AG04450 (cell line): ENCODE measurements at regions of chr1 and their contacts with region 1.

Region 1: GRCh38 chr1:150149271-150150132 is at the start of gene PLEKHO1:
- DNase-seq: no peak
- H3K4me3 ChIP-seq: peak within 1 kb of the TSS; percentile 90
- H3K27ac ChIP-seq: peak within 1 kb of the TSS; percentile 89
- H3K27me3 ChIP-seq: no peaks in the 10 kb centered on the region
- CTCF ChIP-seq: no peak
- polyA plus RNA-seq, gene PLEKHO1: 62.0 and 73.4 TPM in 2 replicates

Region 2: GRCh38 chr1:150072959-150073358 is 76.5 kb before region 1 on chr1:
- CTCF ChIA-PET with region 1: interaction called, 16 read pairs
- POLR2A ChIA-PET with region 1: no interaction called
- DNase-seq: no peak
- H3K4me3 ChIP-seq: no peak overlapping the region
- H3K27ac ChIP-seq: no peak overlapping the region
- H3K27me3 ChIP-seq: no peaks in the 10 kb centered on the region
- CTCF ChIP-seq: peak; percentile 46

Region 3: DNA sequence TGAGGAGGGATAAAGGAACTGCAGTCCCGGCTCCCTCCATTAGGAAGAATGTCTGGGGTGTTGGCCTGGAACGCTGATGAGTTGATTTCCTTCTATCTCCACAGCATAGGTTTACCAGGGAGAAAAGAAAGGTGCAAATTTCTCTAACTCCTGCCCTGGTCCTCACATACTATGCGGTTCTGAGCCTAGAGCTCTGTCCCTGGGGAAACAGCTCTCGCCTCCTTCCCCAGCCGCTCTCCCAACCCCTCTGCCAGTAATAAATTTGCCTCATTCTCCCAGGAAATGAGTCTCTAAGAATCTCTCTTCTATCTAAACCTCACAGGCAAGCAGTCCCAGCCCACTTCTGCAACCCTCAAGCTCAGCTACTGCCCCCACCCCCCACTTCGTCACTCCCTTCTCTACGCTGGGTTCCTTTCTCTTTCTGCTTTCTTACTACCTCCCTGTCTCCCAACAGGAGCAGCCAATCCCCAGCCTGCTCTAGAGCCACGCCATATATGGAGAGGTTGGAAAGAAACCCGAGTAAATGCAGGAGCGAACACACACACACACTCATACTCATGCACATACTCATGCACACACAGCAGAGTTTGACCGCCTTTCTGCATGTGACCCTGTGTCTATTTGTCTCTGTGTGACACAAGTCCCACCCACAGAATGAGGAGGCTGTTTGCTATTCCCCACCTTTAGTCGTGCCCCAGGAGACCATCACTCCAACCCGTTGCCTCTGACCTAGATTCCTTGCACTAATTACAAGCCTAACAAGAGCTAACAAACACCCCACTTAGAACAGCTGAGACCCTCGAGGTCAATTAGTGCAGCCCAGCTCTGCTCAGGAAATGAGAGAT is 13.6 kb after region 1 on chr1:
- CTCF ChIA-PET with region 1: interaction called, 5 read pairs
- POLR2A ChIA-PET with region 1: interaction called, 149 read pairs
- DNase-seq: peak; percentile 99
- H3K4me3 ChIP-seq: peak overlapping the region; percentile 30; the same call in 1 of the 2 replicates
- H3K27ac ChIP-seq: peak overlapping the region; percentile 99
- H3K27me3 ChIP-seq: no peaks in the 10 kb centered on the region
- CTCF ChIP-seq: no peak; the same call in 1 of the 2 replicates

Region 4: GRCh38 chr1:150309770-150310508 is 160.4 kb after region 1 on chr1:
- CTCF ChIA-PET with region 1: no interaction called
- POLR2A ChIA-PET with region 1: no interaction called
- DNase-seq: no peak
- H3K4me3 ChIP-seq: no peak overlapping the region
- H3K27ac ChIP-seq: no peak overlapping the region
- H3K27me3 ChIP-seq: no peaks in the 10 kb centered on the region
- CTCF ChIP-seq: no peak

Region 5: DNA sequence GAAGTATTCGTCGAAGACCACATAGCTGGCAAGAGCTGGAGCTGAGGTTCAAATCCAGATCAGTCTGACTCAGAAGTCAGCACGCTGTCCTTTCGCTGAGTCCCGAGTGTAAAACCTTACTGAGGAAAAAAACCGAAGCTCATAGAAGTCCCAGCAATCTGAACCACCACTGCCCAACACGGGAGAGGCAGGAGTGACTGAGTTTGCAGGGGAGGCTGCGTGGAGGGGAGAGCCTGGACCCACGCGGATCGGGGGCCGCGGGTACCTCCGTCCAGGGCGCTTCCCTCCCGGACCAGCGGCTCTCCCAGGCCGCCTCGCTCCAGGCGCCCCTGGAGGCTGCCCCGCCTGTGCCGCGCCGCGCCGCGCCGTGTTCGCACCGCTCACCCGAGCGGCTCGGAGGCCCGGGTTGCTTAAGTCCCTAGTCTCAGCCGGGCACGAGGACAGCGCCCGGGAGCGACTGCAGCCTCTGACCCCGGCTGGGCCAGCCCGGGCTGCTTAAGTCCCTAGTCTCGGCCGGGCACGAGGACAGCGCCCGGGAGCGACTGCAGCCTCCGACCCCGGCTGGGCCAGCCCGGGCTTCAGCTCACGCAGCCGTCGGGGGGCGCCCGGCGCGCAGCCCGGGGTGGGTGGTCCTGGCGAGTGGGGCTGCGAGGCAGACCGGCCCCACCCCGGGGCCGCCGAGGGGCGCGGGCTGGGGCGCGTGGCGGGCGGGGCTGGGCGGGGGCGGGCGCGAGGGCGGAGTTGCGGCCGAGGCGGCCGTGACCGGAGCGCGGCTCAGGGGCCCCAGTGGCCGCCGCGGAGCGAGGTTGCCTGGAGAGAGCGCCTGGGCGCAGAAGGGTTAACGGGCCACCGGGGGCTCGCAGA is 399.4 kb after region 1 on chr1 and contains the start of gene ADAMTSL4:
- CTCF ChIA-PET with region 1: no interaction called
- POLR2A ChIA-PET with region 1: no interaction called
- DNase-seq: no peak
- H3K4me3 ChIP-seq: peak within 1 kb of the TSS; percentile 64
- H3K27ac ChIP-seq: peak within 1 kb of the TSS; percentile 61
- H3K27me3 ChIP-seq: no peaks in the 10 kb centered on the region
- CTCF ChIP-seq: 0 out of 2 replicates have a peak, but pooled peaks have one; percentile 10
- polyA plus RNA-seq, gene ADAMTSL4: 4.2 and 4.9 TPM in 2 replicates